HEK293T (cell line): ENCODE measurements at regions of chr17 and their contacts with region 1.

Region 1: DNA sequence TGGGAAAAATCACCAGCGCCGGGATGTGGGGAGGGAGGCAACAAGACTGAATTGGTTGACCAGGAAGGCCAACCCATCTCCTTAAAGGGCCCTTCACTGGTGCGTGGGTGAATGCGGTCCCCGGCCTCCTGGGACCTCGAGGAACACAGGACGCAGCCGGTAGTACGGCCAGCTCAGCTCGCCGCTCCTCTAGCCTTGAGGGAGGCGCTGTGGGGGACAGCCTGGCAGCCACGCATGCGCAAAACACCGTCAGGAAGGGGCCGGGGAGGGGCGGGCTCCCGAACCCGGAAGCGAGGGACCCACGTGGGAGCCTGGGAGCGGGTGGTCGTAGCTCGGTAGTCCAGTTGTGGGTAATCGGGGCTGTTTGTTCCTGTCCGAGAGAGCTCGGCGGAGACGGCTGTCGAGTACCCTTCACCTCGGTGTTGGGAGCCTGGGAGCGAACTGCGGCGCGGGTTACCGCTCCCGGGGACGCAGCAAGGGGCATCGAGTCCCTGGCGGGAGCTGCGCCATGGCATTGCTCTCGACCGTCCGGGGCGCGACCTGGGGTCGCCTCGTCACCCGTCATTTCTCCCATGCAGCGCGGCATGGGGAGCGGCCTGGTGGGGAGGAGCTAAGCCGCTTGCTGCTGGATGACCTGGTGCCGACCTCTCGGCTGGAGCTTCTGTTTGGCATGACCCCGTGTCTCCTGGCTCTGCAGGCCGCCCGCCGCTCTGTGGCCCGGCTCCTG is at the start of gene MRM1:
- DNase-seq: peak; percentile 87

Region 2: DNA sequence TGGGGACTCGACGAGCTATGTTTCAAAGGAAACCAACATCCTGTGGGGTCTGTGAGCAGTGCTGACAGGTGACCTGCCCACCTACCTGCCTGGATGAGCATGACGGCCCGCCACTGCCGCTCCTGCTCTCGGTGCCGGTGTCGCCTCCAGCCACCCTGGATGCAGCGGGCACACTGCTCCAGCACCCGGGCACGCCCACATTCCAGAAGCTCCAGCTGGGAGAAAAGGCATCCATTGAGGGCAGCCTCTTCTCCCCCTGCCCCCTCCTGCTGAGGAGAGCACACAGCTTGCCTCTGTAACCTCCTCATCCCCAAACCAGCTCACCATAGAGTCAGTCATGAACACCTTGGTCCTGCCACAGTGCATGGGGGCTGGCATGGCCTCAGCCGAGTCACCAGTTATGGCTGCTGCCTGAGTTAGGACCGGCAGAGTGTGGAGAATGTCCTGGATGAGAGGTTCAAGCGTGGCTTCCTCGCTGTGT is 100.7 kb before region 1 on chr17:
- CTCF ChIA-PET with region 1: no interaction called
- POLR2A ChIA-PET with region 1: no interaction called
- DNase-seq: no peak

Region 3: DNA sequence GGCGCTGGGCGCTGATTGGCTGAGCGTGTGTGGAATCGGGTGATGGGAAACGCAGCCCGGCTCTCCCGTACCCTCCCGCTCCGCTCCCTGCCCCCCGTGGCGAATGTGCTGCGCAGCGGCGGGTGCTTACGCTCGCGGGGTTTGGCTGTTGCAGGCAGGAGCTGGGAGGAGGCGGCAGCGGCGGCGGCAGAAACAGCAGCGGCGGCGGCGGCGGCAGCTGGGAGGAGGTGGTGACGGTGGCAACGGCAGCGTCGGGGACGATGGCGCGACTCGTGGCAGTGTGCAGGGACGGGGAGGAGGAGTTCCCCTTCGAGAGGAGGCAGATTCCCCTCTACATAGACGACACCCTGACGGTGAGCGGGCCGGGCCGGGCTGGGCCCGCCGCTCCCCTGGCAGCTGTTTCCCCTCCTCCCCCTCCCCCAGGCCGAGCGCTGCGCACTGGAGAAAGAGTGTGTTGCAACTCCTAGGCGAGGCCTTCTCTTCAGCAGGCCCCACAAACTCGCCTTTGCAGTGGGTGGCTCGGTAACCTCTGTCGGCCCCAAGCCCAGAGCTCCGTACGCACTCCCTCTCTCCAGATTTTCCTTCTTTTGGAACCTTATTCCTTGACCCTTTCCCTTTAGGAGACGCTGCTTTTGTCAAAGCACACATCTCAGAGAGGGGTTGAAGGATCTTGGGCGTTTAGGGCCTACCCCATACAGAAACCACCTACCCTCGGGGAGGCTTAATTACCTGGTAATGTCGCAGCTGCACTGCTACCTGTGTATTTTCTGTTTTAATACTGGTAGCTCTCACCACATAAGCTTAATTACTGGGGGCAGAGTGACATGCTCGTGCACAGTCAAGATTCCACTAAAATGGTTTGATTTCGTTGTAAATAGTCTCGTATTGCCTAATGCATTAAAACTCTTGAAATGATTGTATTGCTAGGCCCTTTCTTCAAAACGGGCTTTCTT is 55.7 kb before region 1 on chr17:
- CTCF ChIA-PET with region 1: no interaction called
- POLR2A ChIA-PET with region 1: interaction called, 12 read pairs
- DNase-seq: peak; percentile 84

Region 4: DNA sequence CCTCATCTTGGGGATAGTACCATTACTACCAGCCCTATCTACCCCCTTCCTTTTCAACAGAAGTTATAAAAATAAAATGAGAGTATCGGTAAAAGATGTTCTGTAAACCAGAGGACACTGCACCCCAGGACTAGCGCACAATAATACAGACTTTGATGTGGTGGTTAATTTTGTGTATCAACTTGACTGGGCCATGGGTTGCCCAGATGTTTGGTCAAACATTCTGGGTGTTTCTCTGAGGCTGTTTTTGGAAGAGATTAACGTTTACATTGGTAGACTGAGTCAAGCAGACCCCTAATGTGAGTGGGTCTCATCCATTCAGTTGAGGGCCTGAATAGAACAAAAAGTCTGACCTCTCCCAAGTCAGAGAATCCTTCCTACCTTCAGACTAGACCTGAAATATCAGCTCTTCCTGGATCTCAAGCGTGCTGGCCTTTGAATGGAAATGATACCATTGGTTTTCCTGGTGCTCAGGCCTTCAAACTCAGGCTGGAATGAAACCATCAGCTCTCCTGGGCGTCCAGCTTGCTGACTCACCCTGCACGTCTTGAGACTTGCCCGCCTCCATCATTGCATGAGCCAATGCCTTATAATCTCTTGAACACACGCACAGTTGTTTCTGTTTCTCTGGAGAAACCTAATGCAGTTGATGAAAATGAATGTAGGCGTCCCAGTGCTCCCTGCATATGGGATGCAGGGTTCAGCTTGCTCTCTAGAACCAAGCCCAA is 10.0 kb after region 1 on chr17:
- CTCF ChIA-PET with region 1: interaction called, 11 read pairs
- POLR2A ChIA-PET with region 1: interaction called, 20 read pairs
- DNase-seq: no peak

Region 5: GRCh38 chr17:36625188-36625587 is 23.7 kb after region 1 on chr17:
- CTCF ChIA-PET with region 1: interaction called, 20 read pairs
- POLR2A ChIA-PET with region 1: interaction called, 8 read pairs
- DNase-seq: no peak

Region 6: DNA sequence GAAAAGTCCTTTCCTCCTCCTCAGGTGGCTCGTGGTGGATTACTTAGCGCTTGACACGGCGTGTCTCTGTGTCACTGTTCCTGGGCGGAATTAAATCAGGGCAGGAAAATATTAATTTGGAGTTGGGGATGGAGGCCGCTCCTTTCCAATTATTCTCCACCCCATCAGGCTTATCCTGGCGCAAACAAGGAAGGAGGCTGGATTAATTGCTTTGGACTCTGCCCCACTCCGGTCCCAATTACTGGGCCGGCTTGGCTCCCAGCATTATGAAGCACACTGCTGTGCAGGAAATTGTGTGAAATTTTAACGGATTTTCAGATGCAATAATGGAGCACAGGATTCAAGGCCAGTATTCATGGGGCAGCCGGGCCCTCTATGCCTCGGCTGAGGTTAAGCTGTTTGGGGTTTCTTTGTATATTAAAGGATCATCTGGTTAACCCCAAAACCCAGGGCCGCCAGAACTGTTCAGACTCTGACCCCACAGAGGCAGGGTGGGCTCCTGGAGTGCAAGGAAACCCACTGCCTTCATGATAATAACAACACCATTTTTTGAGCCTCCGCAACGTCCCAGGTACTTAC is 87.7 kb after region 1 on chr17:
- CTCF ChIA-PET with region 1: no interaction called
- POLR2A ChIA-PET with region 1: no interaction called
- DNase-seq: no peak